ENCODE measurements at regions of chr1 and their contacts with region 1.

Region 1: DNA sequence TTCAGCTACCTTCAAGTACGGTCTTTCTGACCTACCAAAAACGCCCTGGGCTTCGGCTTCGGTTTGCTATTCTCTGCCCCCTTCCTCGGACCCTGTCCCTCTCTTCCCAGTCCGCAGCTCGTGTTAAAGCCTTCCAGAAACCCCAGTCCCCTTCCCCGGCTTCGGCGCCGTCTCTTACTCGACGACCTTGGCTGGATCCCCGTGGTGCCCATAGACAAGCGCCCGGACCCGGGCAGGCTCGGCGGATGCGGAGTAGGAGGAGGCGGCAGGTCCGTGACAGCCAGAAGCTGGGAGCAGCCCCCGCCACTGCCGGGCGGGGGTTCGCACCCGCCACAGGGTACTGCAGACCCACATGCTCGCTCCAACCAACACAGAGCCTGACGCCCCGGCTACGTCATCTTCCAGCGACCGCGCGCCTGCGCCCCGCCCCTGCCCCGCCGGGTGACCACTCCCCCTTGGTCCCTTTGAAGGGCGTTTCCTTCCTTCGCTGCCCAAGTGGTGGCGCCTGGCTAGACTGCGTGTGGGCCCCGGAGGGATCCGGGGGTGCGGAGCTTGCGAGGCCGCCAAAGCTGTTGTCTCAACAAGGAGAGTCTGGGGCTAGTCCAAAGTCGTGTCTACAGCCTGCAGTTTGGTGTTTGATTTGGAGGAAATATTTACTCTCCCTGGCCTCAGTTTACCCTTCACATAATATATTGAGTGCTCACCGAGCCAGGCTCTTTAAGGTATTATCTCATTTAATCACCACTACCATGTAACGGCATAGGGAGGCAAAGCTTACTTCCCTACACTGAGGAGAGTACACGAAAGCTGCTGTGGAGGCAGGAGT is at the start of gene MECR:
- DNase-seq: peak; percentile 95
- ATAC-seq: peak; percentile 99
- total RNA-seq, gene MECR: 25.8 to 26.2 TPM

Region 2: DNA sequence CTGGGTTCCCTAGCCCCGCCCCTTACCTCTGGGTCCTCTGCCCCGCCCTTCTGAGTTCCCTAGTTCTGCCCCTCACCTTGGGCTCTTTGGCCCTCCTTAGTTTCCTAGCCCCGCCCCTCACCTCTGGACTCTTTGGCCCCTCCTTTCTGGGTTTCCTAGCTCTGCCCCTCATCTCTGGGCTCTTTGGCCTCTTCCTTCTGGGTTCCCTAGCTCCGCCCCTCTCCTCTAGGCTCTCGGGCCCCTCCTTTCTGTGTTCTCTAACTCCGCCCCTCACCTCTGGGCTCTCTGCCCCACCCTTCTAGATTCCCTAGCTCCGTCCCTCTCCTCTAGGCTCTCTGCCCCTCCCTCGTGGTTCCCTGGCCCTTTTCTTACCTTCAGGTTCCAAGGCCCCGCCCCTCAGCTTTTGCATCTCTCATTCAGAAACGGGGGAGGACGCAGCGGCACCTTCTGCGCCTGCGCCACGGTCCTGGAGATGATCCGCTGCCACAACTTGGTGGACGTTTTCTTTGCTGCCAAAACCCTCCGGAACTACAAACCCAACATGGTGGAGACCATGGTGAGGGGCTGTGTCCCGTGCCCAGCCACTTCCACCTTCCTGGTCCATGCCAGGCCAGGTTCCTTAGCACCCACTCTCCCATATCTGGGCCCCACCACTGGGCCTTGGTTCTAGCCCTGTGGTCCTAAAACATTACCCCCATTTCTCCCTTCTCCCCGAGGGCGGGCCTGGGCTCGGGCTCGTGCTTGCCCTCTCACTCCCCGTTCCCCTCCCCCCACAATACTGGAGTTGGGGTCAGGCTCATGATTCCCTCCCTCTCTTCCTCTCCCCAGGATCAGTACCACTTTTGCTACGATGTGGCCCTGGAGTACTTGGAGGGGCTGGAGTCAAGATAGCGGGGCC is 94.3 kb after region 1 on chr1:
- intact Hi-C with region 1: no loop called
- DNase-seq: no peak
- ATAC-seq: no peak

Region 3: DNA sequence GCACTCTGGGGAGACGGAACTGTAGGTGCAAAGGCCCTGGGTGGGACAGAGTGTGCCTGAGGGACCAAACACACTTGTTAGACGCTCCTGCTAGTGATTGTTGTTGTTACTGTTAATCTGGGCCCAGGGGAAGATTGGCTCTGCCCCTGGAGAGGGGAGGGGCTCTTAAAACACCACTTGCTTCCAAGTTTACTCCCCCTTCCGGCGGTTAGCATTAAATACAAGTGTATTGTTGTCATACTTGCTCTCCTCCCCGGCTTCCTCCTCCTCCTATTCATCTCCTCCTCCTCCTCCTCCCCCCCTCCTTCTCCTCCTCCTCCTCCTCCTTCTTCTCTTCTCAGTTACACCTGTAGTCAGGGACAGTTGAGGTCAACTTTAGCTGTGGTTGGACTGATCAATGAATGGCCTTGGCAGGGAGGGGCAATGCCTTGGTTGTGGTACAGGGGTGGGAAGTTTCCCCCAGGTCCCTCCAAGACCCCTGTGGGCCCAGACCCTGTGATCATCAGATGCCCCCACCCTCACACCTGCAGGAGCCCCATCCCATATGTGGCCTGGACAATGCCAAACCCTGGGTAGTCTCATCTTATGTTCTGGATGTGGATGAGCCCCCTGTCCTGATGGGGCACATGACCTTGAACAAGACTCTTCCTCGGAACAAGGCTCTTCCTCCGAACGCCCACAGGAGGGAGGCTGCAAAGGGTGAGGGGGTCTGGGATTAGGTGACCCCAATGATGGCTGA is 222.9 kb after region 1 on chr1:
- intact Hi-C with region 1: loop called in 1 of 2 experiments (anchors 10 kb)
- DNase-seq: no peak
- ATAC-seq: peak; percentile 50 to 58

Region 4: DNA sequence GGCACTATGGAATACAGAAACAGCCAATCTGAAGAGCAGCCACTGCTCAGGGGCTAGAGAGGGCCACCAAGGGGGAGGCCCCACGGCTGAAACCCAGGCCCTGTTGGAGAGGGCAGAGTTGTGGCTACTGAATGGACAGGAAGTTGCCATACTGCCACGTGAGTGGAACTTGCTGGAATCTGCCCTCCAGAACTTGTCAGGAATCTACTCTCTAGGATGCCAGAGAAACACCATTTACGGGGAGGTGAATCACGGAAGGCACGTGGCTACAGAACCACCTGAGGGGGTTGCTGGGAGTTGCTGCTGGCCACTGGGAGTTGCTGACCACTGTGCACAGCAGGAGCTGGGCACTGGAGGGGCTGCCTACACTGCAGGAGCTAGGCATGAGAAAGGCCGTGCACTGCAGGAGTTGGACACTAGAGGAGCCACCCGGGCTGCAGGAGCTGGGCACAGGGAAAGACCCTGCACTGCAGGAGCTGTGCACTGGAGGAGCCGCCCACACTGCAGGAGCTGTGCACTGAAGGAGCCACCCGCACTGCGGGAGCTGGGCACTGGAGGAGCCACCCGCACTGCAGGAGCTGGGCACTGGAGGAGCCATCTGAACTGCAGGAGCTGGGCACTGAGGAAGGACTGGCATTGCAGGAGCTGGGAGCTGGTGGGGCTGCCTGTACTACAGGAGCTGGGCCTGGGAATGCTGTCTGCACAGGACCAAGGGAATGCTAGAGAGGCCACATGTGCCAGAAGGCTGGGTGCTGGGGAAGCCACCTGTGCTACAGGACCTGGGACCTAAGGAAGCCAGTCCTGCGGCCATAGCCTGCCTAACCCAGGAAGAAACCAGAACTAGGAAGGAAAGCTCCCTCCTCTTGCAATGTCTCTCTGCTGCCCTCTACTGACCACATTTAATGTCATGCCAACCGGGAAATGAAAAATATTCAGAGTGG is 1149.2 kb after region 1 on chr1:
- intact Hi-C with region 1: loop called (anchors 5 to 10 kb)
- DNase-seq: no peak
- ATAC-seq: peak; percentile 76 to 79

Measured in left cardiac atrium (tissue), 4 donors.